CD8-positive, alpha-beta memory T cell (primary cell): ENCODE measurements at regions of chr4 and their contacts with region 1.

Region 1: GRCh38 chr4:89434364-89434988 is 126.9 kb upstream of the GPRIN3 start:
- DNase-seq: peak in 2 of 5 donors; percentile 25 to 30
- H3K4me3 ChIP-seq: no peak overlapping the region
- H3K4me3 Mint-ChIP-seq: no peak overlapping the region
- H3K27ac ChIP-seq: no peak overlapping the region
- H3K27ac Mint-ChIP-seq: no peak overlapping the region
- H3K4me1 ChIP-seq: peaks cover 8% of the 10 kb centered on the region
- H3K4me1 Mint-ChIP-seq: peaks cover 7 to 14% (median 8%) of the 10 kb centered on the region in 3 donors
- H3K27me3 ChIP-seq: no peaks in the 10 kb centered on the region
- H3K27me3 Mint-ChIP-seq: no peaks in the 10 kb centered on the region

Region 2: GRCh38 chr4:89226665-89227574 is 207.6 kb before region 1 on chr4:
- CTCF ChIA-PET with region 1: interaction called, 54 read pairs
- POLR2A ChIA-PET with region 1: no interaction called
- DNase-seq: peak; percentile 55 to 81 (median 67)
- H3K4me3 ChIP-seq: no peak overlapping the region
- H3K4me3 Mint-ChIP-seq: peak overlapping the region in 6 of 7 donors; percentile 38 to 78 (median 65)
- H3K27ac ChIP-seq: no peak overlapping the region
- H3K27ac Mint-ChIP-seq: peak overlapping the region in 2 of 8 donors; percentile 78 to 80
- H3K4me1 ChIP-seq: no peaks in the 10 kb centered on the region
- H3K4me1 Mint-ChIP-seq: peaks cover 5 to 8% (median 5%) of the 10 kb centered on the region in 3 donors
- H3K27me3 ChIP-seq: no peaks in the 10 kb centered on the region
- H3K27me3 Mint-ChIP-seq: peaks cover 0 to 10% of the 10 kb centered on the region in 2 donors

Region 3: GRCh38 chr4:89324671-89325070 is 109.8 kb before region 1 on chr4:
- CTCF ChIA-PET with region 1: no interaction called
- POLR2A ChIA-PET with region 1: no interaction called
- DNase-seq: no peak
- H3K4me3 ChIP-seq: no peak overlapping the region
- H3K4me3 Mint-ChIP-seq: no peak overlapping the region
- H3K27ac ChIP-seq: no peak overlapping the region
- H3K27ac Mint-ChIP-seq: no peak overlapping the region
- H3K4me1 ChIP-seq: no peaks in the 10 kb centered on the region
- H3K4me1 Mint-ChIP-seq: peaks cover 0 to 9% (median 5%) of the 10 kb centered on the region in 3 donors
- H3K27me3 ChIP-seq: no peaks in the 10 kb centered on the region
- H3K27me3 Mint-ChIP-seq: no peaks in the 10 kb centered on the region